Cardiac septum (tissue), 1 donor: ENCODE measurements at regions of chr7 and their contacts with region 1.

Region 1: GRCh38 chr7:90211391-90212148 is at the start of gene STEAP2:
- DNase-seq: peak; percentile 91
- total RNA-seq, gene STEAP2: 15.9 TPM

Region 2: DNA sequence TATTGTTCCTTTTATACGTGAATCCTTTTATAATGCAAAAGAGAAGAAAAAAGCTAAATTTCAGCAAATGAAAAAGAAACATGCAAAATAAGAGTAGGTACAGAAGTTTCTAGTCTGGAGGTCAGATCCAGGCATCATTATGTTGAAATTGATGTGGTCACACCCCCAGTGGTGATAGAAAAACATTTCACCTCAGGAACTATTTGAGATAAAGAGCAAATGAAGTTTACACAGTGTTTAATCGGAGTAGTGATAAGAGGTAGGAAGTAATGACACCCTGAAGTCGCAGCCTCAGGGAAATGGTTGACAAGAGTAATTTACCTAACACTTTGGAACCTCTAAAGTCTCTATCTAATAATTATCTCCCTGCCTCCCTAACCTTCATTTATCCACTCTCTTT is 593.3 kb before region 1 on chr7:
- intact Hi-C with region 1: no loop called
- DNase-seq: no peak

Region 3: DNA sequence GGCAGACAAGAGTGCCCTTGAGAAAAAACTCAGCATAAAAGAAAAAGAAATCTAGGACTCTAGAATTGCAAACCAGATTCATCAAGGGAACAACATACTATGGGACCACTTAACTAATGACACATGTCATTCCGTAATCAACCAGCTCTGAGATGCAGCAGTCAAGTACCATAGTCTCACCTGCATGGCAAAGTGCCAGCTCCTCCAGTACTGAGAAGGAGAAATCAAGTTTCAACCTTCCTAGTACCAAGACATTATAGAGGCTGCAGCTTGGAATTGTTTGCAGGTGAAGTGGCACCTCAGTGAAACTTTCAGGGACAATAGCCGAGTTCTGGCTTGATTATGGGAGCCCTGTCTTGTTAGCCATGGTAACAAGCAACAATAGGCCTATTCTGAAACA is 45.8 kb before region 1 on chr7:
- intact Hi-C with region 1: no loop called
- DNase-seq: no peak

Region 4: GRCh38 chr7:90250601-90251303 is 39.2 kb after region 1 on chr7:
- intact Hi-C with region 1: loop called (anchors 5 kb)
- DNase-seq: no peak

Region 5: GRCh38 chr7:90503379-90503778 is 291.8 kb after region 1 on chr7:
- intact Hi-C with region 1: no loop called
- DNase-seq: no peak

Region 6: DNA sequence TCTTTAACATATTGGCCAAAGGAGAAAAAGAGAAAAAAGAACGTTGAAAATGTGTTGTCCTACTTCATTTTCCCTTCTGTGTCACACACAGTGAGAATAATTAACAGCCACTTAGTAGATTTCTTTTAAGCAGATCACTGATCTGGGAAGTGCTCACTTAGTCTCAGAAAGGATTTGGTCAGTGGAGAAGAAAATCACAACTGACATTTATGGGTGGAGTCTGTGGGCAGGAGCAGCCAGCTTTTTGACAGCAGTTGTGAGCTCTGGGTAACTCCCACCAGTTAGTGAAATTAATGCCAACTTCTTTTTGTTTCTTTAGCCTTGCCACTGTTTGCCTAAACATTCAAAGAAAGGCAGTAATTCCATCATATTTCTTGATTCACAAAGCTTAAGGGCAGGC is 434.2 kb after region 1 on chr7:
- intact Hi-C with region 1: no loop called
- DNase-seq: no peak